Cardiac septum (tissue), 1 donor: ENCODE measurements at regions of chr20 and their contacts with region 1.

Region 1: GRCh38 chr20:34473262-34473883 is 42.8 kb upstream of the DYNLRB1 start:
- DNase-seq: no peak

Region 2: GRCh38 chr20:34312544-34313217 is 160.7 kb before region 1 on chr20:
- intact Hi-C with region 1: loop called (anchors 5 kb)
- DNase-seq: peak; percentile 95

Region 3: GRCh38 chr20:34600892-34601653 is 127.7 kb after region 1 on chr20:
- intact Hi-C with region 1: no loop called
- DNase-seq: no peak